ENCODE measurements at regions of chr18 and their contacts with region 1.

Region 1: GRCh38 chr18:34976899-34977837 is 64.0 kb upstream of the MAPRE2 start:
- DNase-seq: no peak
- ATAC-seq: peak; percentile 68
- H3K4me3 ChIP-seq: peak overlapping the region; percentile 67 to 69
- H3K27ac ChIP-seq: no peak overlapping the region
- H3K4me1 ChIP-seq: peaks cover 15 to 55% of the 10 kb centered on the region in 2 experiments
- H3K27me3 ChIP-seq: no peaks in the 10 kb centered on the region
- CTCF ChIP-seq: no peak
- POLR2A ChIP-seq: no peak
- RAD21 ChIP-seq: no peak

Region 2: GRCh38 chr18:34890486-34891085 is 86.6 kb before region 1 on chr18:
- CTCF ChIA-PET with region 1: no interaction called
- POLR2A ChIA-PET with region 1: no interaction called
- RAD21 ChIA-PET with region 1: no interaction called
- intact Hi-C with region 1: no loop called
- DNase-seq: no peak
- ATAC-seq: no peak
- H3K4me3 ChIP-seq: no peak overlapping the region
- H3K27ac ChIP-seq: no peak overlapping the region
- H3K4me1 ChIP-seq: no peaks in the 10 kb centered on the region
- H3K27me3 ChIP-seq: no peaks in the 10 kb centered on the region
- CTCF ChIP-seq: no peak
- POLR2A ChIP-seq: no peak
- RAD21 ChIP-seq: no peak

Region 3: GRCh38 chr18:34929336-34929780 is 47.8 kb before region 1 on chr18:
- CTCF ChIA-PET with region 1: no interaction called
- POLR2A ChIA-PET with region 1: interaction called, 3 read pairs
- RAD21 ChIA-PET with region 1: no interaction called
- intact Hi-C with region 1: loop called (anchors 5 kb)
- DNase-seq: peak; percentile 55
- ATAC-seq: peak; percentile 91
- H3K4me3 ChIP-seq: peak overlapping the region in 1 of 2 experiments; percentile 35; a peak in 2 of 4 replicates
- H3K27ac ChIP-seq: peak overlapping the region; percentile 37; the same call in 1 of the 2 replicates
- H3K4me1 ChIP-seq: peaks cover 19 to 25% of the 10 kb centered on the region in 2 experiments; a peak in 3 of 4 replicates
- H3K27me3 ChIP-seq: no peaks in the 10 kb centered on the region
- CTCF ChIP-seq: no peak
- POLR2A ChIP-seq: no peak
- RAD21 ChIP-seq: no peak

Measured in HCT116 (cell line).